Activated T-helper 1 cell treated with anti-CD3 and anti-CD28 coated beads, Interleukin-12 subunit alpha, Interleukin-12 subunit beta, Interleukin-2, Interleukin-4 antibody, amounts not matched to agents 30 ng/mL and 10 ng/mL and 1 ng/mL, durations not matched to agents 14 hours and 24 hours and 36 hours (primary cell): ENCODE measurements at regions of chr11 and their contacts with region 1.

Region 1: DNA sequence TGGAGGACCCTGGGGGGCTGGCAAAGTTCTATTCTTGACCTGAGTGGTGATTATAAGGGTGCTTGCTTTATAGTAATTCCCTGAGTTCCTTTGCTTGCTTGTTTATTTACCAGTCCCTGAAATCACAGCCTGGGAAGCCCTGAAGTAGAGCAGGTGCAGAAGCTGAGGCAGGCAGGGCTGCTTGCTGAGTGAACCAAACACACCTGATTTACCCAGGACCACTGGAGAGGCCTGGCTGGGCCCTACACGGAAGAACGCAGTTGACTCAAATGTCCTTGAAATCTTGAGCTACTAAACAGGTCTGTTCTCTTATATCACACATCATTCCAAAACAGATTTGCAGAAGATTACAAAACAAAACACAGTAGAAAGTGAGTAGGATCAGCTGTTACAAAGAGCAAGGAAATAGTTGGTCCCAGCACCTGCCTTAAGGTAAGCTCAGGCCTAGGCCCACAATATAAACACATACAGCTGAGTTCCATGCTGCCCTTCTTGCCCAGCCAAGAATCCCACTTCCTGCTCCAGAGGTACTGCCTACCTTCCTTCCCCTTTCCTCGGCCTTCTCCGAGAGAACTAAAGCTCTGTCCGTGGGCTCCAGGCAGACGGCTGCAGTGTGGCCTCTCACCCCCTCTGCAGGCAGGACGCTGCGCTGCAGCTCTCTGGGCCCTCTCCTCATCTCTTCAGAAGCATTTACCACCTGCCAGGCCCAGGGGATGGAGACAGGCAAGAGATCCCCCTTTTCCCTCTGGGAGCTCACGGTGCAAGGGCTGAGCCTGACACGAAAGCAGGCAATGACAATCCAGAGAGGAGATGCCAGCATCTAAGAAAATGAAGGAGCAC is 46.1 kb upstream of the SCUBE2 start:
- DNase-seq: peak; percentile 57
- H3K4me3 Mint-ChIP-seq: peak overlapping the region; percentile 4
- H3K27ac Mint-ChIP-seq: peak overlapping the region; percentile 72
- H3K4me1 Mint-ChIP-seq: peaks cover 29% of the 10 kb centered on the region
- H3K27me3 Mint-ChIP-seq: no peaks in the 10 kb centered on the region

Region 2: DNA sequence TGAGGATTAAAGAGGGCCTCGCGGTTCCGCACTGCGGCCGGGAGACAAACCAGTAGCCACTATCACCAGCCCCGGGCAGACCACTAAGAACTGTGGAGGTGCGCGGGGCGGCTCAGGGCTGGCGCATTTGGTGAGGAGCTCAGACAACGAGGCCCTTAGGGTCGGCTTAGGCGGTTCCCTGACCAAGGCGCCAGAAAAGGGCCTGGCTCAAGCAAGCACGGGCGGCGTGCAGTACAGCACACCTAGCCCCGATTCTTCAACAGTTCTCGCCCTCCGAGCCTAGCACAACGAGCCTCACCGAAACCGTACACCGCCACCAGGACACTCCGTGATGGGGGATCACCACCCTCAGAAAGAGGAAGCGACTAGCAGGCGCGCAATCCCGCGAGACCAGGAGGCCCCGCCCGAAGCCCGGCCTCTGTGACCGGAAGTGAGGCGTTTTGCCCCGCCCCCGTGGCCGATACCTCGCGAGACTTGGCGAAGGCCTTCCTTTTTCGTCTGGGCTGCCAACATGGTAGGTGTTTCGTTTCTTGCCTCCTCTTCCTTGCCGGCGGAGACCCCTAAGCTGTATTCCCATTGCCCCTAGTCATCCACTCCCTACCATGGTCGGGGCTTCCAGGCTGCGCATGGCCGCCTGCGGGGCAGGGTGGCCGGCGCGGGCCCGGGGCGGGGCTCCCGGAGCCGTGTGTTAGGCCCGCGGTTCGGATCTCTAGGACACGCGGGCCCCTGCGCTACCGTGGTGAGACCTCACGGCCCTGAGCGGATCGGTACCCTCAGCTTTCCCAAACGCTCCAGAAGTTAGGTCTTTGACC is 455.0 kb before region 1 on chr11 and contains the starts of genes RPL27A and TRIM66:
- intact Hi-C with region 1: loop called (anchors 5 kb)
- DNase-seq: peak; percentile 99
- H3K4me3 Mint-ChIP-seq: peak within 1 kb of the TSS; percentile 97
- H3K27ac Mint-ChIP-seq: peak within 1 kb of the TSS; percentile 95
- H3K4me1 Mint-ChIP-seq: peaks cover 42% of the 10 kb centered on the region
- H3K27me3 Mint-ChIP-seq: no peaks in the 10 kb centered on the region
- total RNA-seq, gene RPL27A: 679 and 691 TPM in 2 replicates
- total RNA-seq, gene TRIM66: 11.7 and 14.2 TPM in 2 replicates

Region 3: DNA sequence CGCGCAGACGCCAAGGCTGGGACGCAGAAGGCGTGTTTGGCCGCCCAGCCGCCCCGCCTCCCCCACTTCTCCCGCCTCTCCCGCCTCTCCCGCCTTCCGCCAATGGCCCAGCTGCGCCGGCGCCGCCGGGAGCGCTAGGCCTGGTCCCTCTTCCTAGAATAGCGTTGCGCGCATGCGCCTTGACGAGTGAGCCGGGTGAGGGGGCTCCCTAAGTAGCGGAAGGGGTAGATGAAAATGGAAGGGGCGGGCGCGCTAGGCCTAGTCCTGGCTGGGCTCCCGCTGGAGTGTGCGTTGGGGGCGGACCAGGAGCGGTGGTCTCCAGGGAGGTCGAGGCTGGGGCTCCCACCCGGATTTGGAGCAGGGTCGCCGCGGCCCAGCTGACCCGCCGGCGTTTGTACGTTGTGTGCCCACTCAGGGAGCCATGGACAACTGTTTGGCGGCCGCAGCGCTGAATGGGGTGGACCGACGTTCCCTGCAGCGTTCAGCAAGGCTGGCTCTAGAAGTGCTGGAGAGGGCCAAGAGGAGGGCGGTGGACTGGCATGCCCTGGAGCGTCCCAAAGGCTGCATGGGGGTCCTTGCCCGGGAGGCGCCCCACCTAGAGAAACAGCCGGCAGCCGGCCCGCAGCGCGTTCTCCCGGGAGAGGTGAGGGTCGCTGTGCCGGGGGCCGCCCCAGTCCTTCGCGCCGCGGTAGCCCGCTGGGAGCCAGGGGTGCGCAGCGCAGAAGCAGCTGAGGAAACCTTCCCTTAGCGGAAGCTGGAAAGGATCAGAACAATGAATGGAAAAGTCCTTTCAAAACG is 226.3 kb before region 1 on chr11 and contains the start of gene AKIP1:
- intact Hi-C with region 1: loop called (anchors 1 kb)
- DNase-seq: peak; percentile 77
- H3K4me3 Mint-ChIP-seq: peak within 1 kb of the TSS; percentile 97
- H3K27ac Mint-ChIP-seq: peak within 1 kb of the TSS; percentile 87
- H3K4me1 Mint-ChIP-seq: peaks cover 45% of the 10 kb centered on the region
- H3K27me3 Mint-ChIP-seq: peaks cover 12% of the 10 kb centered on the region
- total RNA-seq, gene AKIP1: 33.4 and 36.9 TPM in 2 replicates

Region 4: GRCh38 chr11:9015677-9016076 is 121.8 kb before region 1 on chr11:
- intact Hi-C with region 1: loop called (anchors 1 kb)
- DNase-seq: peak; percentile 44
- H3K4me3 Mint-ChIP-seq: no peak overlapping the region
- H3K27ac Mint-ChIP-seq: no peak overlapping the region
- H3K4me1 Mint-ChIP-seq: peaks cover 31% of the 10 kb centered on the region
- H3K27me3 Mint-ChIP-seq: peaks cover 15% of the 10 kb centered on the region

Region 5: DNA sequence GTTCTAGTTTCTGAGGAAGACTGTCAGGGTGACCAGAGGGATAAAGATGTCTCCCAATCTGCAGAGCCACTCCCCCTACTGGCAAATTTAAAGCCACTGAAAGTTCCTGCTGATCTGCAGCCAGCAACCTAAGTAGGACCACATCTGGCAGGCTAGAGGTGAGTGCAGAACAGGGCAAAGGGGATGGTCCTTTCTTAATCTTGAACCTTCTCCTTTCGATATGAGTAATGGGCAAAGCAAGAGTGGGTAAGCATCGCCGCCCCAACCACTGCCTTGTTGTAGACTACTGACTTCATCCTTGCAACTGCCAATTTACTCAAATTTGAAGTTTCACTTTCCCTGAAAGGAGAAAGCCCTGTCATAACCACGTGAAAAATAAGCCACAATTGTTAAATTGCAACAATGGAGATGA is 76.8 kb before region 1 on chr11:
- intact Hi-C with region 1: loop called (anchors 2 kb)
- DNase-seq: peak; percentile 48
- H3K4me3 Mint-ChIP-seq: no peak overlapping the region
- H3K27ac Mint-ChIP-seq: peak overlapping the region; percentile 40
- H3K4me1 Mint-ChIP-seq: peaks cover 12% of the 10 kb centered on the region
- H3K27me3 Mint-ChIP-seq: peaks cover 16% of the 10 kb centered on the region

Region 6: GRCh38 chr11:9120664-9121485 is 16.6 kb before region 1 on chr11:
- intact Hi-C with region 1: no loop called
- DNase-seq: no peak
- H3K4me3 Mint-ChIP-seq: no peak overlapping the region
- H3K27ac Mint-ChIP-seq: no peak overlapping the region
- H3K4me1 Mint-ChIP-seq: no peaks in the 10 kb centered on the region
- H3K27me3 Mint-ChIP-seq: no peaks in the 10 kb centered on the region

Region 7: DNA sequence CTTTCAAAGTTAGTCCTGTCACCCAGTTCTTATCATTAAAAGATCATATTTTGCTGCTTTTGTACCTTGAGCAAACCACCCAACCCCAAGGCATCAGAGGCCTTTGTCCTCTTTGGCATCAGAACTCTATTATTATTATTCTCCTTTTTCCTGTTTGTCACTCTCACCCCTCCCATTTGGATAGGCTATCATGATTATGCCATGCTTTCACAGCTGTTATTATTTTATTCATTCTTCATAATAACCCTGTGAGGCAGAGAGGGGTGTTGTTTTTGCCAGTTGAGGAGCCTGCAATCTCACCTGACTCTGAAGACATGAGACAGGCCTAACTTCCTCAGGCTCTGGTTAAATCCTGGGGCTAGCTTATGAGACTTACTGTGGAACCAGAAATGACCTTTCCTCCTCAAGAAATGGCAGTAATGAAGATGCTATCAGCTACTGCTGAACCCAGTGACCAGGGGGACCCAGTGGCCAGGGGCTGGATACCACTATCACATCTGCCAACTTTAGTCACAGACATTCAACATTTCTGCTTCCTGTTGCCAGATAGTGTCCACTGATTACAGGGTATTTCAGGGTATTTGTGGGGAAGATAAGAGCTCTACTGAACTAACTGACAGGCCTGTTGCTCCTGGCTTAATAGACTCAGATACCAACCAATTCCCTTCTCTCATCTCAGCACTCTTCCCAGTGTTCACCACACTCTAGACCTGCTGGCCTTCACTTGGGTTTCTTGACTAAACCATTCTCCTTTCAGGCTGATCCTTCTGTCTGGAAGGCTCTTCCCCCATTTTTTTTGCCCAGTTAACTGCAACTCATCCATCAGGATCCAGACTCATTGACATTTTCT is 514.6 kb after region 1 on chr11:
- intact Hi-C with region 1: no loop called
- DNase-seq: no peak
- H3K4me3 Mint-ChIP-seq: no peak overlapping the region
- H3K27ac Mint-ChIP-seq: no peak overlapping the region
- H3K4me1 Mint-ChIP-seq: no peaks in the 10 kb centered on the region
- H3K27me3 Mint-ChIP-seq: no peaks in the 10 kb centered on the region